ENCODE measurements at regions of chr4 and their contacts with region 1.

Region 1: GRCh38 chr4:183471946-183472708 is 27.7 kb downstream of the CDKN2AIP start:
- DNase-seq: peak; percentile 8
- ATAC-seq: peak; percentile 94
- H3K4me3 ChIP-seq: no peak overlapping the region
- H3K27ac ChIP-seq: no peak overlapping the region
- H3K4me1 ChIP-seq: no peaks in the 10 kb centered on the region
- H3K27me3 ChIP-seq: no peaks in the 10 kb centered on the region
- CTCF ChIP-seq: peak; percentile 74 to 79 (median 74)
- EP300 ChIP-seq: no peak
- POLR2A ChIP-seq: no peak
- RAD21 ChIP-seq: peak; percentile 83

Region 2: GRCh38 chr4:183602557-183603027 is 130.5 kb after region 1 on chr4:
- CTCF ChIA-PET with region 1: interaction called, 10 read pairs
- POLR2A ChIA-PET with region 1: no interaction called
- RAD21 ChIA-PET with region 1: no interaction called
- SMC1A ChIA-PET with region 1: no interaction called
- in situ Hi-C with region 1: loop called (anchors 5 kb)
- intact Hi-C with region 1: loop called (anchors 1 kb)
- DNase-seq: no peak
- ATAC-seq: no peak
- H3K4me3 ChIP-seq: no peak overlapping the region
- H3K27ac ChIP-seq: no peak overlapping the region
- H3K4me1 ChIP-seq: no peaks in the 10 kb centered on the region
- H3K27me3 ChIP-seq: no peaks in the 10 kb centered on the region
- CTCF ChIP-seq: peak in 1 of 3 experiments; percentile 23; a peak in 1 of 6 replicates
- EP300 ChIP-seq: no peak
- POLR2A ChIP-seq: no peak
- RAD21 ChIP-seq: peak; percentile 41; the same call in 1 of the 2 replicates

Region 3: DNA sequence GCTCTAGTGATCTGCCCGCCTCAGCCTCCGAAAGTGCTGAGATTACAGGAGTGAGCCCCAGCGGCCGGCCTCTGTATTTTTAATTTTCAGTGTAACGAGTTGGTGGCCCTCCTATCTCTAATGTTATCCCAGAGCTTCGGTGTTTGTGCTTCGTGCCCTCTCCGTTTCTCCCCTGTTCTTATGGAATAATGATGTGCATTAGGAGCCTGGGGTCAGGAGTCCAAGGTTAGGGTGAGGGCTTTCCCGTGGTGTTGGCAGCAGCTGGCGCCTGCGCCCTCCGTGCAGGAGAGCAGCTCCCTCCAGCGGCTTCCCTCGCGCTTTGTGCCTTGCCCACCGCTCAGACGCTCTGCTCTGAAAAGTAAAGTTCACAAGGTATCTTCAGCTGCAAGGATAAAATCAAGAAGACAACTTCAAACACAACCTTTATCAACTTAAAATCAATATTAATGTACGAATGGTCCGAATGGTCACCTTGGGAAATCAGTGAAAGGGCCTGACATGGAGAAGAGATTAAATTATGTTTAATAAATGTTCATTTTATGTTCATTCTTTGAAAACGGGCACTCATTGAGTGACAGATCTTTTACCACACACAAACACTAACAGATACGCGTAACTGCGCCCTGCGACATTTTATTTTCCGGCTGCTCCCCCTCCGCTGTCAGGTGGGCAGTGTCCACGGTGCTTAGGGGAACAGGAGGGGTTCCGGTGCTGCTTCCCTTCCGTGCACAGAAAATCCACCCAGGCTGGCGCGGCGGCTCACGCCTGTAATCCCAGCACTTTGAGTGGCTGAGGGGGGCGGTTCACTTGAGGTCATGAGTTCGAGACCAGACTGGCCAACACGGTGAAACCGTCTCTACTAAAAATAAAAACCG is 249.3 kb after region 1 on chr4:
- CTCF ChIA-PET with region 1: interaction called, 4 read pairs
- POLR2A ChIA-PET with region 1: interaction called, 4 read pairs
- RAD21 ChIA-PET with region 1: no interaction called
- SMC1A ChIA-PET with region 1: no interaction called
- in situ Hi-C with region 1: no loop called
- intact Hi-C with region 1: loop called (anchors 2 kb)
- DNase-seq: no peak
- ATAC-seq: peak; percentile 52
- H3K4me3 ChIP-seq: no peak overlapping the region
- H3K27ac ChIP-seq: no peak overlapping the region
- H3K4me1 ChIP-seq: peaks cover 7% of the 10 kb centered on the region
- H3K27me3 ChIP-seq: no peaks in the 10 kb centered on the region
- CTCF ChIP-seq: peak; percentile 50 to 64 (median 60); a peak in 5 of 6 replicates
- EP300 ChIP-seq: no peak
- POLR2A ChIP-seq: no peak
- RAD21 ChIP-seq: 0 out of 2 replicates have a peak, but pooled peaks have one; percentile 21

Region 4: GRCh38 chr4:183840311-183840710 is 368.2 kb after region 1 on chr4:
- CTCF ChIA-PET with region 1: no interaction called
- POLR2A ChIA-PET with region 1: no interaction called
- RAD21 ChIA-PET with region 1: no interaction called
- SMC1A ChIA-PET with region 1: no interaction called
- in situ Hi-C with region 1: no loop called
- intact Hi-C with region 1: loop called (anchors 5 kb)
- DNase-seq: peak; percentile 5
- ATAC-seq: peak; percentile 92
- H3K4me3 ChIP-seq: no peak overlapping the region
- H3K27ac ChIP-seq: no peak overlapping the region
- H3K4me1 ChIP-seq: no peaks in the 10 kb centered on the region
- H3K27me3 ChIP-seq: no peaks in the 10 kb centered on the region
- CTCF ChIP-seq: peak; percentile 81 to 89 (median 88)
- EP300 ChIP-seq: no peak
- POLR2A ChIP-seq: no peak
- RAD21 ChIP-seq: peak; percentile 93

Region 5: DNA sequence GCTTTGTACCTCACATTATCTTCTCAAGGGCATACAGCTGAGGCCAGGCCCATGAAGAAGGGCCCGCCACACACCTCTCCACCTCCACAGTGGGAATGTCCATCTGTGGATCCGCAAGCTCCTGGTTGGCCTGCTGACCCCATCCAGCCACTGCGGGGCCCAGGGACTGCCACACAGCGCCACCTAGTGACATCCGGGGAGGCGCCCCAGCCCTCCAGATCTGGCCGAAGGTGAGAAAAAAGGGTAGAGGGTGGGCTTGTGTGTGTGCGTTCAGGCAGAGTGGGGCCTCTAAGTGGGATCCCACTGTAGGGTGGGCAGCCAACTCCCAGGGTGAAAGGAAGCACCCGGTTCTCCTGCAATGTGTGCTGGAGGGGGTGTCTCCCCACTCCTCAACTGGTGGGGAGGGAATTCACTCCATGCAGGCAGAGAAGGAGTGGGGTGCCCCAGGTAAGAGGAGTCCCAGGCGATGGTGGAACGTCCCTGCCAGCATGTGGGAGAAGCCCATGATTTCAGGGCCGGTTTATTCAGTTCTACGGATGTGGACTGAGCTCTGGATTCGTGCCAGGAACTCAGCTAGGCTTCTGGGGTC is 628.3 kb after region 1 on chr4:
- CTCF ChIA-PET with region 1: no interaction called
- POLR2A ChIA-PET with region 1: interaction called, 4 read pairs
- RAD21 ChIA-PET with region 1: no interaction called
- SMC1A ChIA-PET with region 1: interaction called, 3 read pairs
- in situ Hi-C with region 1: loop called (anchors 10 kb)
- intact Hi-C with region 1: loop called (anchors 5 kb)
- DNase-seq: no peak
- ATAC-seq: peak; percentile 94
- H3K4me3 ChIP-seq: no peak overlapping the region
- H3K27ac ChIP-seq: no peak overlapping the region
- H3K4me1 ChIP-seq: no peaks in the 10 kb centered on the region; the same call in none of the 2 replicates
- H3K27me3 ChIP-seq: peaks cover 0 to 1% of the 10 kb centered on the region in 2 experiments; a peak in 1 of 4 replicates
- CTCF ChIP-seq: peak; percentile 79 to 91 (median 85)
- EP300 ChIP-seq: no peak
- POLR2A ChIP-seq: no peak
- RAD21 ChIP-seq: peak; percentile 81

Region 6: GRCh38 chr4:184168406-184169019 is 696.4 kb after region 1 on chr4:
- CTCF ChIA-PET with region 1: interaction called, 3 read pairs
- POLR2A ChIA-PET with region 1: no interaction called
- RAD21 ChIA-PET with region 1: no interaction called
- SMC1A ChIA-PET with region 1: interaction called, 3 read pairs
- in situ Hi-C with region 1: no loop called
- intact Hi-C with region 1: loop called (anchors 5 kb)
- DNase-seq: no peak
- ATAC-seq: peak; percentile 99
- H3K4me3 ChIP-seq: no peak overlapping the region
- H3K27ac ChIP-seq: no peak overlapping the region
- H3K4me1 ChIP-seq: no peaks in the 10 kb centered on the region
- H3K27me3 ChIP-seq: no peaks in the 10 kb centered on the region; a peak in 3 of 4 replicates
- CTCF ChIP-seq: peak; percentile 84 to 99 (median 91)
- EP300 ChIP-seq: no peak
- POLR2A ChIP-seq: no peak
- RAD21 ChIP-seq: peak; percentile 66

Region 7: DNA sequence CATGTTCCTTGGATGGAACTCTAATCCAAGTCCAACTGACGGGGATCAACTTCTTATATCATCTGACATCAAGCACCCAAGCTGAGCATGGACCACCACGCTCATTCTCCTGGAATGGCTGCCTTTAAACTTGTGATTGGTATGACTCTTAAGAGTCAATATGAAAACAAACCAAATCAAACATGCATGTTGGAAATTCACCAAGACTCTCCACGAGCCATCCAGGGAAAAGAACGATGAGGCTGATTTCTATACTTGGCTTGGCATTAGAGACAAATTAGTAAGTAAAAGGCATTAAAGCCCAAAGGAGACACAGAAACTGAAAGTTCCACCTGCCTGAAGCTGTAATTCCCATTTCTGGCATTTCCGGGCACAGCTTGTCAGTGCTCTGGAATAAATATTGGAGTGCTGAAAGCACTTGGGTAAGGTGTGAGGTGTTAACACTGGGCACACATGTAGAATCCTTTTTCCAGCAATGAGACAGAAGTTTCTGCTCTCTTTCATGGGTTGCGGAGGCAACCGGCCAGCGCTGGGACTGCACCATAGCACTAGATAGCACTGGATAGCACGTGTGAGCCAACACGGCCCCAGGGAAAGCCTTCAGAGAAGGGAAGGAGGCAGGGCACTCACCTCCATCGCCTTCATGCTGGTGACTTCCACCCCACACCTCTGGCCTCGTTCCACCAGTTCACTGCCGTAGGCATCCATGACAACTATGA is 1303.9 kb after region 1 on chr4:
- CTCF ChIA-PET with region 1: no interaction called
- POLR2A ChIA-PET with region 1: no interaction called
- RAD21 ChIA-PET with region 1: no interaction called
- SMC1A ChIA-PET with region 1: no interaction called
- in situ Hi-C with region 1: loop called (anchors 5 kb)
- intact Hi-C with region 1: no loop called
- DNase-seq: no peak
- ATAC-seq: no peak
- H3K4me3 ChIP-seq: no peak overlapping the region
- H3K27ac ChIP-seq: no peak overlapping the region
- H3K4me1 ChIP-seq: no peaks in the 10 kb centered on the region
- H3K27me3 ChIP-seq: no peaks in the 10 kb centered on the region
- CTCF ChIP-seq: no peak
- EP300 ChIP-seq: no peak
- POLR2A ChIP-seq: no peak
- RAD21 ChIP-seq: no peak

Measured in GM12878 (cell line).